ENCODE measurements at regions of chr2 and their contacts with region 1.

Region 1: DNA sequence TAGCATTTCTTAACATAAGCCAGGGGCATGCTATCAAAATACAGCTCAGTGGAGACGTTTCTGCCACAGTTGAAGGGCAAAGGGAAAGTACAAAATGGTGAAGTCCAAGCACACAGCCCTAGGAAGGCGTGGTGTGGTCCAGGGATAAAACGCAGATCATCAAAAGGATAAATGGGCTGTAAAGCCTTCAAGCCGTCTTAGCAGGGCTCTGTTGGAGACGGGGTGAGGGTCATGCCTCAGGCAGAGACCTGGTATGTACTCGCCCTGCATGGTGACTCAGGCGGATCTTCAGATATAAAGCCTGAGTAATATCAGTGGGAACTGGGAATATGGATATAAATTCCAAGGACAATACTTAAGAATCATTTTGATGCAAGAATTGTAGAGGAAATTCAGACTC is 61.2 kb downstream of the NGEF start:
- DNase-seq: peak; percentile 65
- ATAC-seq: peak; percentile 90
- H3K4me3 ChIP-seq: no peak overlapping the region
- H3K27ac ChIP-seq: no peak overlapping the region
- H3K4me1 ChIP-seq: peaks cover 11% of the 10 kb centered on the region
- H3K27me3 ChIP-seq: no peaks in the 10 kb centered on the region
- CTCF ChIP-seq: no peak

Region 2: GRCh38 chr2:232901736-232902578 is 49.9 kb before region 1 on chr2:
- CTCF ChIA-PET with region 1: no interaction called
- POLR2A ChIA-PET with region 1: interaction called, 12 read pairs
- intact Hi-C with region 1: no loop called
- DNase-seq: peak; percentile 94
- ATAC-seq: peak; percentile 98
- H3K4me3 ChIP-seq: peak overlapping the region; percentile 52
- H3K27ac ChIP-seq: peak overlapping the region; percentile 88
- H3K4me1 ChIP-seq: peaks cover 22% of the 10 kb centered on the region
- H3K27me3 ChIP-seq: no peaks in the 10 kb centered on the region
- CTCF ChIP-seq: no peak